Prostate gland (tissue), 2 donors: ENCODE measurements at regions of chr14 and their contacts with region 1.

Region 1: GRCh38 chr14:49892636-49893308 is at the start of gene ARF6:
- DNase-seq: peak; percentile 97
- H3K4me3 ChIP-seq: peak within 1 kb of the TSS; percentile 95 to 98
- H3K27ac ChIP-seq: peak within 1 kb of the TSS; percentile 99 to 100
- H3K4me1 ChIP-seq: peaks cover 9% of the 10 kb centered on the region
- H3K27me3 ChIP-seq: no peaks in the 10 kb centered on the region
- CTCF ChIP-seq: peak in 3 of 4 experiments; percentile 24 to 69 (median 52)
- POLR2A ChIP-seq: peak; percentile 96
- total RNA-seq, gene ARF6: 64.3 to 92.7 TPM

Region 2: GRCh38 chr14:49581209-49582112 is 311.3 kb before region 1 on chr14:
- intact Hi-C with region 1: no loop called
- DNase-seq: no peak
- H3K4me3 ChIP-seq: no peak overlapping the region
- H3K27ac ChIP-seq: no peak overlapping the region
- H3K4me1 ChIP-seq: no peaks in the 10 kb centered on the region
- H3K27me3 ChIP-seq: no peaks in the 10 kb centered on the region
- CTCF ChIP-seq: no peak
- POLR2A ChIP-seq: no peak

Region 3: DNA sequence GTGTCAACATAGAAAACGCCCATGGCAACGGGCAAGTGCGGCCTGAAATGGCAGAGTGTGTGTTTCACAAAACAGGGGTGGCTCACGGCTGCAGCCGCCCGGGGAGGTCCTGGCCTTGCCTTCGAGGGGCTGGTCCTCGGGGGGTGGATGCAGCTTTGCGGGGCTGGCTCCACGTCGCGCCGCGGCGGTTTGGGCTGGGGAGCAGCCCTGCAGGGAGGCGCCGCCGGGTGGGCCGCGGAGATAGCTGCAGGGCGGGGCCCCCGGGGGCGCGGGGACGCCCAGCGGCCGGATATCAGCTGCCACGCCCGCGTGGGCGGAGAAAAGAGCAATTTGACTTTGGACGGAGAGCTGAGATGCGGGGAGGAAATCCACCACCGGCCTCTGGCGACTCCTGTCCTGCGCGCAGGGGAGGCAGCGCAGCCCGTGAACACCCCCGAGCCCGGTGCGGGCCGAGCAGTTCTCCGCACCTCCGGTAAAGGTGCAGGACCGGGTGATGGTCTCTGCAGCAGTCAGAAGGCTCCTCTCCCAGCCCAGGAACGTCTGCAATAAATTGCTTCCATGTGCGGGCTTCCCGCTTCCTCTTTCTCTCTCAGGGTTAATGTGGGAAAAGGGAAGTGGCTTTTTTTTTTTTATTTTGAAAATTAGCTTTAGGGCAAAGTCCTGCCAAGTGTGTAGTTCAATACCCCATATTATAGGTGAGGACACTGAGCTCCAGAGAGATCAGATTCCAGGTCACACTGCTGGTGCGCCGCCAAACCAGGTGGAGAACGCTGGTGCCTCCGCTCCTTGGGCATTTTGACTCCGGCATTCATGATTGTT is 110.7 kb after region 1 on chr14:
- intact Hi-C with region 1: loop called (anchors 5 kb)
- DNase-seq: peak; percentile 67
- H3K4me3 ChIP-seq: peak overlapping the region; percentile 30 to 52
- H3K27ac ChIP-seq: peak overlapping the region; percentile 87 to 90
- H3K4me1 ChIP-seq: peaks cover 20% of the 10 kb centered on the region
- H3K27me3 ChIP-seq: no peaks in the 10 kb centered on the region
- CTCF ChIP-seq: peak in 3 of 4 experiments; percentile 13 to 47 (median 29)
- POLR2A ChIP-seq: peak; percentile 52

Region 4: GRCh38 chr14:50109342-50109741 is 216.6 kb after region 1 on chr14:
- intact Hi-C with region 1: loop called (anchors 10 kb)
- DNase-seq: no peak
- H3K4me3 ChIP-seq: no peak overlapping the region
- H3K27ac ChIP-seq: no peak overlapping the region
- H3K4me1 ChIP-seq: no peaks in the 10 kb centered on the region
- H3K27me3 ChIP-seq: no peaks in the 10 kb centered on the region
- CTCF ChIP-seq: no peak
- POLR2A ChIP-seq: no peak